ENCODE measurements at regions of chr16 and their contacts with region 1.

Region 1: DNA sequence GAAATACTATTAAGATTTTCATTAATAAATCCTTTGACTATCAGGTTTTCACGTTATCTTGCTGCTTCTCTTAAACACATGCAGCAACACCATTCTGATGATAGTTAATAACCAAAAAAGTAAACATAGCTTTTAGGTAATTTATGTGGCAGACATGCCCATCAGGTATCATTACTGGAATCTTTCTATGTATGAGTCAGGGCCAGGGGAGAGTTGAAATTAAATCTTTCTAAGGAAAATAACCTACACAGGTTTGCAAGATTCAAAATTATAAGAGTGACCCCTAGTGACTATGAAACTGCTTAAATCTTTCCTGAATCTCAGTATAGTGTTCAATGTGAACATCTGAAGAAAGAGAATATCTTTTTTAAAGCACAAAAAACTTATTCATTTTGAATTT is 666.6 kb downstream of the CDH11 start:
- DNase-seq: no peak
- H3K4me3 ChIP-seq: no peak overlapping the region
- H3K27ac ChIP-seq: no peak overlapping the region
- H3K4me1 ChIP-seq: no peaks in the 10 kb centered on the region
- H3K27me3 ChIP-seq: no peaks in the 10 kb centered on the region
- CTCF ChIP-seq: peak in 1 of 2 donors; percentile 6

Region 2: GRCh38 chr16:64089697-64090096 is 365.6 kb before region 1 on chr16:
- CTCF ChIA-PET with region 1: no interaction called
- dilution Hi-C with region 1: no loop called
- in situ Hi-C with region 1: no loop called
- intact Hi-C with region 1: loop called (anchors 10 kb)
- DNase-seq: peak; percentile 7
- H3K4me3 ChIP-seq: no peak overlapping the region
- H3K27ac ChIP-seq: no peak overlapping the region
- H3K4me1 ChIP-seq: no peaks in the 10 kb centered on the region
- H3K27me3 ChIP-seq: no peaks in the 10 kb centered on the region
- CTCF ChIP-seq: peak; percentile 19 to 52

Region 3: DNA sequence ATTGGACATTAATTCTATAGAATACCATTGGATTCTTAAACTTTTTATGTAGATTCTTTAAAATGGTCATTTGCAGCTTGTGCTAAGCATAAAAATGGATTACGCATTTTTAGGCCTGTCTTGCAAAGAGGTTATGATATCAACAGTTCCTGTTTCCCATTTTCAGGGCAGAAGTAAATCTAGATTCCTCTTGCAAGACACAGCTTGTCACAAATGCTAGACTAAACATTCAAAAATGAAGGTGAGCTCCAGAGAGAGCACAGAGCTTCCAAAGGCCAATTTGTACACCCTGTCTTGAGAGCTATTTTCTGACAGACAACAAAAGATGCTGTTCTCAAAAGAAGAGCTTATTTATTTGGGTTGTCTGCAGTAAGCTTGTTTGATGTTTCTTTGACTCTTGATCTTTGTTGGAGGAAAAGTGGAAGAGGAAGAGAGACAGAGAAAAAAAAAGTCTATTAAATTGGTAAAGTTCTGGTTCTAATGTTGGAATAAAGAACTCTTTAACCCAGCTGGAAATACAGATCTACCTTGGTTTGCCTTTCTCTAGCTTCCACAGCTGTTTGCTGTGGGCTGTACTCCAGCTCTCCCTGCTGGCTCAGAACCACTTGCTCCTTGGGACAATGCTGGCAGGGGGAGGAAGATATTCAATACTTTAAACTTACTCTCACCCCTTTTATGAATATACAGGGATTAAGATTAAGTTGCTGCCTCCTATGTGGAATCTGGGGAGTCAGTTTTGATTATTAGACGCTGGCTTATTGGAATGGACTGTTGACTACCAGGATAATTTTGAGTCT is 14.8 kb after region 1 on chr16:
- CTCF ChIA-PET with region 1: no interaction called
- dilution Hi-C with region 1: no loop called
- in situ Hi-C with region 1: no loop called
- intact Hi-C with region 1: no loop called
- DNase-seq: no peak
- H3K4me3 ChIP-seq: no peak overlapping the region
- H3K27ac ChIP-seq: no peak overlapping the region
- H3K4me1 ChIP-seq: no peaks in the 10 kb centered on the region
- H3K27me3 ChIP-seq: no peaks in the 10 kb centered on the region
- CTCF ChIP-seq: peak in 1 of 2 donors; percentile 26